ENCODE measurements at regions of chr1 and their contacts with region 1.

Region 1: DNA sequence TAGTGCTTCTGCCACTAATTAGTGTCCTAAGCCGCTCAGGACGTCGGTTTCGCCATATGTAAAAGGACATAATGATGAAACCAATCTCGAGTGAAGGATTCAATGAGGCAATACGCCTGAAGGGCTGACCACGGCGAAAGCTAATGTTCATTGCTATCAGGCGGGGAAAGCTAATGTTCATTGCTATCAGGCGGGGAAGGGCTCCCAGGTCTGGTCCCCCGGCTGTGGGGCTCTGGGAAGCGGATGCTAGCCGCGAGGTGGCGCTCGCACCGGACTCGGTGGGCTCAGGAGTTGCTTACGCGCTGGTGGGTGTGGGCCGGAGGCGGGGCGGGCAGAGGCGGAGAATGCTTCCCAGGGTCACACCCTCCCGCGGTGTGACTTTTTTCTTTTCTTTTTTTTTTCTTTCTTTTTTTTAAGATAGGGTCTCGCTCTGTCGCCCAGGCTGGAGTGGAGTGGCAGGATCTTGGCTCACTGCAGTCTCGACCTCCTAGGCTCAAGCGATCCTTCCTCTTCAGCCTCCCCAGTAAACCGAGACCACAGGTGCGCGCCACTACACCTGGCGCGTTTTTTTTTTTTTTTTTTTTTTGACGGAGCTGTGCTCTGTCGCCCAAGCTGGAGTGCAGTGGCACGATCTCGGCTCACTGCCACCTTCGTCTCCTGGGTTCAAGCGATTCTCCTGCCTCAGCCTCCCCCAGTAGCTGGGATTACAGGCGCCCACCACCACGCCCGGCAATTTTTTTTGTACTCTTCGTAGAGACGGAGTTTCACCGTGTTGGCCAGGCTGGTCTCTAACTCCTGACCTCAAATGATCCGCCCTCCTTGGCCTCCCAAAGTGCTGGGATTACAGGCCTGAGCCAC is 1.1 kb upstream of the PEAR1 start:
- DNase-seq: peak; percentile 62 to 97
- H3K4me3 ChIP-seq: peak overlapping the region in 2 of 4 experiments; percentile 14 to 55; a peak in 4 of 8 replicates
- H3K27ac ChIP-seq: no peak overlapping the region
- H3K4me1 ChIP-seq: peaks cover 0 to 16% (median 9%) of the 10 kb centered on the region in 4 experiments; a peak in 5 of 7 replicates
- H3K27me3 ChIP-seq: peaks cover 8 to 54% (median 43%) of the 10 kb centered on the region in 4 experiments
- CTCF ChIP-seq: peak; percentile 84 to 93 (median 92)
- EP300 ChIP-seq: no peak
- POLR2A ChIP-seq: no peak
- RAD21 ChIP-seq: peak; percentile 45 to 63

Region 2: DNA sequence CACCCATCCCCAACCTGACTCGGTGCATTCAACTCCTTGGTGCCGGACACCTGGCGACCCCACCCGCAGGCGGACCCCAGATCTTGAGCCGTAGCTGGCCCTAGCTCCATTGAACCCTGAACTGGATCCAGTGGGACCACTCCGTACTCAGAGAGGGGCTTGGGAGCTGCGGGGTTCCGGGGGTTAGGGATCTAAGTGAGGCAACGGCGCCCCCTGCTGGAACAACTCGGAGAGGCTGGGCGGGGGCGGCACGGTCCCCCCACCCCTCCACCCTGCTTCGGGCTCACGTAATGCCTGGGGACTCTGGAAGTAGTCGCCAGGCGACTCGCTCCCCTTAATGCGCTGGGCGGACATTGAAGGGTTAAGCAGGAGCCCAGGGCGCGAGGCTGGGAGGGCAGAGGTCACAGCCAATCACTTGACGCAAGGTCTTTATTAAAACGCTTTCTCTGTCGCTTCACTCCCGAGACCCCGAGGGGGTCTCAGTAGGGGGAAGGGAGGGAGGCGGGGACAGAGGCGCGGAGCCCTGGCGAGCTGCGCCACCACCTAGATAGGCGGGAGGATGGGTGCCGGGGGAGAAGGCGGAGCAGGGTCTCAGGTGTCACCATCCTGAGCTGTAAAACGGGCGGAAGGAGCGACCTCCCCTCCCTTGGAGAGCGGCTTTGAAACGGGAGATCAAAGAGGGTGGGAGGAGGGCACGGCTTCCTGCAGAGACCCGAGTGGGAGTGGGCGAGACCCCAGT is 186.3 kb before region 1 on chr1:
- CTCF ChIA-PET with region 1: interaction called, 18 read pairs
- POLR2A ChIA-PET with region 1: no interaction called
- DNase-seq: peak; percentile 86 to 98
- H3K4me3 ChIP-seq: peak overlapping the region; percentile 50 to 80 (median 70)
- H3K27ac ChIP-seq: peak overlapping the region; percentile 79
- H3K4me1 ChIP-seq: peaks cover 27 to 57% (median 45%) of the 10 kb centered on the region in 4 experiments
- H3K27me3 ChIP-seq: peaks cover 0 to 19% (median 8%) of the 10 kb centered on the region in 4 experiments; a peak in 4 of 7 replicates
- CTCF ChIP-seq: peak; percentile 72 to 86 (median 81)
- EP300 ChIP-seq: peak in 1 of 2 experiments; percentile 51; a peak in 1 of 3 replicates
- POLR2A ChIP-seq: no peak
- RAD21 ChIP-seq: peak; percentile 78 to 88

Region 3: GRCh38 chr1:156788136-156788535 is 104.3 kb before region 1 on chr1:
- CTCF ChIA-PET with region 1: no interaction called
- POLR2A ChIA-PET with region 1: no interaction called
- DNase-seq: no peak
- H3K4me3 ChIP-seq: no peak overlapping the region
- H3K27ac ChIP-seq: no peak overlapping the region
- H3K4me1 ChIP-seq: no peaks in the 10 kb centered on the region
- H3K27me3 ChIP-seq: no peaks in the 10 kb centered on the region
- CTCF ChIP-seq: no peak
- EP300 ChIP-seq: no peak
- POLR2A ChIP-seq: no peak
- RAD21 ChIP-seq: no peak

Region 4: GRCh38 chr1:156805766-156806511 is 86.5 kb before region 1 on chr1:
- CTCF ChIA-PET with region 1: interaction called, 84 read pairs
- POLR2A ChIA-PET with region 1: no interaction called
- DNase-seq: no peak
- H3K4me3 ChIP-seq: no peak overlapping the region
- H3K27ac ChIP-seq: no peak overlapping the region
- H3K4me1 ChIP-seq: no peaks in the 10 kb centered on the region; a peak in 1 of 7 replicates
- H3K27me3 ChIP-seq: peaks cover 0 to 2% (median 0%) of the 10 kb centered on the region in 4 experiments; a peak in 1 of 7 replicates
- CTCF ChIP-seq: no peak
- EP300 ChIP-seq: no peak
- POLR2A ChIP-seq: no peak
- RAD21 ChIP-seq: no peak

Region 5: DNA sequence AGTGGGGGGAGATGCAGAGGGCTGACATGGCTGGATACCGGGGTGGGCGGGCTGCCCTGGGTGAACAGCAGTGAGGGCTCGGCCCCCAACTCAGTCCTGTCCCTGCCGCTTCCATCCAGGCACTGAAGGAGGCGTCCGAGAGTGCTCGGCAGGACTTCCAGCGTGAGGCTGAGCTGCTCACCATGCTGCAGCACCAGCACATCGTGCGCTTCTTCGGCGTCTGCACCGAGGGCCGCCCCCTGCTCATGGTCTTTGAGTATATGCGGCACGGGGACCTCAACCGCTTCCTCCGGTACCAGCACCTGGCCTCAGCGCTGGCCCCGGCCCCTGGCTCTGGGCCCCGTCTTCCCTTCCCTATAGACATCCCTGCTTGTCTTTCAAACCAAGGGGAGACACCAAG is 16.1 kb before region 1 on chr1:
- CTCF ChIA-PET with region 1: interaction called, 229 read pairs
- POLR2A ChIA-PET with region 1: interaction called, 5 read pairs
- DNase-seq: peak; percentile 46 to 78
- H3K4me3 ChIP-seq: no peak overlapping the region
- H3K27ac ChIP-seq: no peak overlapping the region
- H3K4me1 ChIP-seq: peaks cover 0 to 4% (median 1%) of the 10 kb centered on the region in 4 experiments; a peak in 4 of 7 replicates
- H3K27me3 ChIP-seq: peaks cover 0 to 41% (median 17%) of the 10 kb centered on the region in 4 experiments; a peak in 6 of 7 replicates
- CTCF ChIP-seq: peak; percentile 56 to 76 (median 75)
- EP300 ChIP-seq: no peak
- POLR2A ChIP-seq: no peak
- RAD21 ChIP-seq: peak; percentile 21 to 39; a peak in 2 of 4 replicates

Region 6: GRCh38 chr1:156910309-156910782 is 17.9 kb after region 1 on chr1:
- CTCF ChIA-PET with region 1: interaction called, 73 read pairs
- POLR2A ChIA-PET with region 1: no interaction called
- DNase-seq: peak in 1 of 2 experiments; percentile 93
- H3K4me3 ChIP-seq: peak overlapping the region in 3 of 4 experiments; percentile 45 to 56 (median 49); a peak in 6 of 8 replicates
- H3K27ac ChIP-seq: no peak overlapping the region
- H3K4me1 ChIP-seq: peaks cover 2 to 12% (median 10%) of the 10 kb centered on the region in 4 experiments
- H3K27me3 ChIP-seq: peaks cover 0 to 15% (median 11%) of the 10 kb centered on the region in 4 experiments; a peak in 6 of 7 replicates
- CTCF ChIP-seq: peak in 2 of 3 experiments; percentile 72 to 74; a peak in 3 of 4 replicates
- EP300 ChIP-seq: no peak
- POLR2A ChIP-seq: no peak
- RAD21 ChIP-seq: peak; percentile 34 to 46

Region 7: GRCh38 chr1:156927215-156928042 is 35.0 kb after region 1 on chr1:
- CTCF ChIA-PET with region 1: interaction called, 287 read pairs
- POLR2A ChIA-PET with region 1: interaction called, 10 read pairs
- DNase-seq: peak in 1 of 2 experiments; percentile 90
- H3K4me3 ChIP-seq: peak overlapping the region; percentile 36 to 70 (median 62)
- H3K27ac ChIP-seq: no peak overlapping the region
- H3K4me1 ChIP-seq: peaks cover 3 to 21% (median 9%) of the 10 kb centered on the region in 4 experiments; a peak in 6 of 7 replicates
- H3K27me3 ChIP-seq: peaks cover 51 to 71% (median 69%) of the 10 kb centered on the region in 4 experiments
- CTCF ChIP-seq: peak; percentile 90 to 92 (median 92)
- EP300 ChIP-seq: no peak
- POLR2A ChIP-seq: no peak
- RAD21 ChIP-seq: peak; percentile 88 to 93

Measured in H1 (cell line).